ENCODE measurements at regions of chr3 and their contacts with region 1.

Region 1: GRCh38 chr3:42012935-42013690 is 51.2 kb upstream of the ULK4 start:
- DNase-seq: peak; percentile 83
- H3K4me3 ChIP-seq: peak overlapping the region; percentile 57
- H3K27ac ChIP-seq: peak overlapping the region; percentile 96
- H3K4me1 ChIP-seq: peaks cover 8% of the 10 kb centered on the region
- H3K27me3 ChIP-seq: no peaks in the 10 kb centered on the region
- CTCF ChIP-seq: no peak

Region 2: DNA sequence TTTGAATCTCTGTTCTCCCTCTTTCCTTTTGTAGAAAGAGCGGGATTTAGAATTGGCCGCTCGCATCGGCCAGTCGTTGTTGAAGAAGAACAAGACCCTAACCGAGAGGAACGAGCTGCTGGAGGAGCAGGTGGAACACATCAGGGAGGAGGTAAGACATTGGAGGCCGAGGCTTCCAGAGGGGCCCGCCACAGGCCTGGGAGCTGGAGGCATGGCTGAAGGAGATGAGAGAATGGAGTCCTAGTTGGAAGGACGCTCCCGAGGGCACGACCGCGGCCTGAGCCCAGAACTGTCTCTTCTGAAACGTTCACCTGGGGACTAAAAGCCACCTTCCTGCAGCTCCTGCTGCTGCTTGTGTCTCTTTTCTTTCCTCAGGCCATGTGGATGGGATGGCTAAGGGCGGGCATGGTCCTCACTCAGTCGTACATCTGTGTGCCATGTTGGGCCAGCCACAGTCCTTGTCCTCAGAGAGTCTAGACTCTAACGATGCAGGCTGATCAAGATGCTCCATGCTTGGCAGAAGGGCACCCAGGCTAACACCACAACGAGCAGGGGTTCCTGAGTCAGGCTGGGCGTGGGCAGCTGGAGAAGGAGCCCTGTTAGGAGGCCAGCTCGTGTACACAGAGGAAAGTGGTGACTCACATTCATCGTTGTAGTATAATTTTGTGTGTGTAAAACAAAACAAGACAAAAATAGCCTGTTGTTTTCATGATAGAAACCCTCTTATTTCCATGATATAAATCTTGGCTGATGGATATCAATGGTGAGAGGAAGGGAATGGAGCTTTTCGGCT is 171.7 kb after region 1 on chr3:
- intact Hi-C with region 1: loop called (anchors 10 kb)
- DNase-seq: no peak
- H3K4me3 ChIP-seq: no peak overlapping the region
- H3K27ac ChIP-seq: no peak overlapping the region
- H3K4me1 ChIP-seq: peaks cover 4% of the 10 kb centered on the region
- H3K27me3 ChIP-seq: no peaks in the 10 kb centered on the region
- CTCF ChIP-seq: no peak